Right ventricle myocardium inferior (tissue), 1 donor: ENCODE measurements at regions of chr17 and their contacts with region 1.

Region 1: DNA sequence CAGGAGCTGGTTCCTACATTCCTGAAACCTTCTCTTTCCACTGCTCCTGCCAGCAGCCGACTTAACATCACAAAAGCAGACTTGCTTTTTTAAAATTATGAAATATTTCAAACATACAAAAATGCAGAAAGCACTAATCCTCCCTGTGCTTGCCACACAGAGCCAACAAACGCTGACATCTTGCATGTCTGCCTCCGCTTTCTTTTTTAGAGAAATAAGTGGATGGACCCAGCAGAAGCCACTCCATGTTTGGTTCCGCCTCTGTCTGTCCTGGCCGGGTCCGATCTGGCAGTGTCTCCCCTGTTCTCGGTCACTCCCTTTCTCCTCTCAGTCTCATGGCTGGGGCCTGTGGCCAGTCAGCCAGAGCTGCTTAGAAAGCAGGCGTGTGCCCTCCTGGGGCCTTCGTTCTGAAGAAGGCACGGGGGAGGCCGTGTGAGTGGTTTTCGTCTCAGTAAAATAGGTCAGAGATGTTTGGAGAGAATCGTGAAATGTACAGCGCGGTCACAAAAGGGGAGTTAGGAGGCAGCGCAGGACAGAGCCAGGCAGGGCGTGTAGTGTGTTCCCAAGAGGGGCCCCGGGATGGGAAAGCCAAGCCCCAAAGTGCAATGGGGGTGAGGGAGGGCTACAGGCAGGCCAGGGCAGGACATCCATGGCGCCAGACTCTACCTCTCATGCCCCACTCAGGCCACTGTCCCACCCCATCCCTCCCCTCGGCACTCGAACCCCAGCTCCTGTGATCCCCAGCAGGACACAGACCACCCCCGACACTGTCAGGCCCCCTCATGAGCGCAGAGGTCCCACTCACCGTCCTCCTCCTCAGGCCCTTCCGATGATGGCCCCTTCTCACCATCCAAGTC is 23.2 kb downstream of the MXRA7 start:
- DNase-seq: peak; percentile 87
- ATAC-seq: peak; percentile 71

Region 2: DNA sequence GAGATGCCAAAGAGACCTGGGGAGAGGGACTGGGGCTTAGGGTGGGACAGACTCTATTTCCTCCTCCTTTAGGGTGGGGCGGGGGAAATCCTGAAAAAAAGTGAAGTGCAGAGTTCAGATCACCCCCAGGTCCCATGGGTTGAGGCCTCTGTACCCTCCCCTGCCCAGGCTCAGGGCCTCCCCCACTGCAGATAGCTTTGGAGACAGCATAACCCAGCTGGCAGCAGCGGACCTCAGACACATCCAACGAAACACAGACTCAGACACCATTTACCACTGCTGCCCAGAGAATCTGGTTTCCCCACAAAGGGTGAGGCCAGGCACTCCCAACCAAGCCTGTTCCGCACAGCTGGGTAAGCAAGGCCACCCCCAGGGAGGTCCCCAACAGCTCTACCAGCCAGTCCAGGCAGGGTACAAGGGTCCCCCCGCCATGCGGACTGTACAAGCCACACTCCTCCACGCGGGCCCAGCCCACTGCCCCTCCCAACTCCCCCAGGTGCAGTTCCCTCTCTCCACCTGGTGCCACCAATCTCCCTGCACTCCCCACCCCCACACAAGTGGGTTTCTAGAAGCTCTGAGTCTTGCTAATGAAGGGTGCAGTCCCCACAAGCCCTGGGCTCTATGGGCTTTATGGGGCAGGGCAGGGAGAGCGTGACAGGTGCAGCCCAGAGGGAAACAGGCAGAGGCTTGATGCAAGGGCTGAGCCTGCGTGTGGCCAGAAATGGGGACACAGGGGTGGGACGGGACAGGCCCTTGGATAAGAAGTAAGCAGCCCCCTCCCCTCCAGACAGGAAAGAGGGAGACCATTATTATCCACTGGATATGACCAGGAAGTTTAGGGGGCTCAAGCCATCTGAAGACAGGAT is 195.2 kb before region 1 on chr17:
- intact Hi-C with region 1: no loop called
- DNase-seq: no peak
- ATAC-seq: peak; percentile 25

Region 3: DNA sequence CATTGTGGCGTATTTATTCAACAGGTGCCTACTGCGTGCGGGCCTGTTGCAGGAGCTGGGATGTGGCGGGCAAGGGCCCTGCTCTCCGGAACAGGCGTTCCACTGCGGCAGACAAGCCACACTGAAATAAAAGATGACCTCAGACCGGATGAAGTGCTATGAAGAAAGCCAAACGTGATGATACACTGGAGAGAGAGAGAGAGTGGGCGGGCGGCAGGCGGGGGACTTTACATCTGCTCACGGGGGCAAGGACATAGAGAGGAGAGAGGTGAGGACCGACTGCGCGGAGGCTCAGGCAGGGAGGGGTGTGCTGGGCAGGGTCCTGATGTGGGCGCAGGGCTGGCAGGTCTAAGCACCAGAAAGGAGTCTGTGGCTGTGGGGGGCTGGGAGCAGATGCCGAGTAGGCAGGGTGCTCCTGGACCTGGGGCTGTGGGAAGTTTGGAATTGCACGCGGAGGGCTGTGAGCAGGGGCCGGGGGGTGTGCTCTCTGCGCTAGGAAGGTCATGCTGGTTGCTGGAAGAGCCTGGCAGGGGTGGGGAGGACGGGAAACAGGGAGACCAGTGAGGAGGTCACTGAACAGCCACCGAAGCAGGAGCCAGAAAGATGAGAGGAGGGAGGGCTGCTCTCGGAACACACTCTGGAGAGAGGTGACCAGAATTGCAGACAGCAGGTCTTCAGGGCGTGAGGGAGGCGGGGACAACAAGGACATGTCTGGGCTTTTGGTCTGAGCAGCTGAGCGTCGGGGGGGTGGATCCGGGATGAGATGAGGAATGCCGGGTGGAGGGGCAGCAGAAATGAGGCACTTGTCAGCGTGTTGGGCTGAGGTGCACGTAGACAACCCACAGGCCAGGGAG is 13.3 kb after region 1 on chr17:
- intact Hi-C with region 1: loop called (anchors 1 kb)
- DNase-seq: peak; percentile 84
- ATAC-seq: peak; percentile 76

Region 4: DNA sequence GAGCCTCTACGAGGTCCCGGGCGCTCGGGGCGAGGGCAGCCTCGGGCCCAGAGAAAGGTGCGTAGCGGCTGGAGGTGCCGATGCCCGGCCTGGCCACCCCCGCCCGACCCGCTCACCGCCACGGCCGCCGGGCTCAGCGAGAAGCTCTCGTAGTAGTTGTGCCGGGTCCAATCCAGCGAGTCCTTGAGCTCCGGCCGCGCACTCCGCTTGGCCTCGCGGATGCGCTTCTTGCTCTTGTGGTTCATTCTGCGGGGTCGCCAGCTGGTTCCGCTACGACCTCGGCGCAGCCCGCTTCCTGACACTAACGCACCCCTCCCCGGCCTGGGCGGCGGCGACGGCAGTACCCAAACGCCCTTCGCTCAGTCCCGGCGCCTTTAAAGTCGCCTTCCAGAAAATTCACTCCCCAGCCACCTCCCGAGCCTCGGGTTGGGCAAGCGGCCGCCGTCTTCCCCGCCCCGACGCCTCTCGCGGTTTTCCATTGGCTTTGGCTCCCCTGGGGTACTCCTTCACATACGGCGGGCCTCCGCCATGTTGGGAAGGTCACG is 38.8 kb after region 1 on chr17 and contains the start of gene JMJD6:
- intact Hi-C with region 1: no loop called
- DNase-seq: peak; percentile 97
- ATAC-seq: peak; percentile 96
- total RNA-seq, gene JMJD6: 62.8 TPM